ENCODE measurements at regions of chr4 and their contacts with region 1.

Region 1: DNA sequence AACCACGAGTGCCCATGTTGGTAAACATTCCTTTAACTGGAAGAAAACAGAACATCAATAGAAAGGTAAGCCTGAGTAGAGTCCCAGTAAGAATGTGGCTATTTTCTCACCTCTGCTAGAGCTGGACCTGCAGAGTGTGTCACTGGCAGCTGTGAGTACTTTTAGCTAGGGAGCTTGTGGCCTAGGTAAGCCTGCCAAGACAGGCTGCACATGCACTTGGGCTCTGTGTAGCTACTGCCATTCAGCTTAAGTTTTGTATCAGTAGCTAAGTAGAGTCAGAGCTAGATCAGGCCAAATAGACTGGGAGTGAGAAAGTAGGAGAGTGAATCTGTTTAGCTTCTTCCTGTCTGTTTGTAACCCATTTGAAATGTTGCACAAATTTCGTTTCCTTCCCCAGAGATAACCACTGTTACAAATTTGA is 35.3 kb downstream of the RBPJ start:
- DNase-seq: no peak
- H3K4me3 ChIP-seq: no peak overlapping the region
- H3K27ac ChIP-seq: no peak overlapping the region
- H3K4me1 ChIP-seq: peaks cover 0 to 12% (median 7%) of the 10 kb centered on the region in 4 experiments; a peak in 4 of 7 replicates
- H3K27me3 ChIP-seq: no peaks in the 10 kb centered on the region
- CTCF ChIP-seq: no peak
- EP300 ChIP-seq: no peak
- POLR2A ChIP-seq: no peak
- RAD21 ChIP-seq: no peak

Region 2: DNA sequence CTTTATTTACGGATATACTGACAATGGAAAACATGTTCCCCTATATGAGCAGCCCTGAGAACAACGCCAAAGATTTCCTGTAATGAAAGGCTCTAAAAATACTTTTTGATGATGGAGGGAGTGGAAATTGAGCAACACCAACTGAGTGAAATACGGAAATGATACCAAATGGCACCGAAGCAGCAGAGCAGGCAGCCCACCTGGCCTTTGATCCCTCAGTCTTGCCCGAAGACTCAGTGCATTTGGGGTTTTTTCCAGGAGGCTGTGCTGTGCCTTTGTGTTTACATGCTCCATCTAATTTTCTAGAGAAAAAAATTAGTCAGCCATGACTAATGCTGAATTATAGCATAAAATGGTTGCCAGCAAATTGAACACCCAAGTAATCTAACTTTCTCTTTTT is 205.1 kb before region 1 on chr4:
- CTCF ChIA-PET with region 1: no interaction called
- POLR2A ChIA-PET with region 1: no interaction called
- DNase-seq: no peak
- H3K4me3 ChIP-seq: no peak overlapping the region
- H3K27ac ChIP-seq: no peak overlapping the region
- H3K4me1 ChIP-seq: no peaks in the 10 kb centered on the region
- H3K27me3 ChIP-seq: no peaks in the 10 kb centered on the region
- CTCF ChIP-seq: no peak
- EP300 ChIP-seq: no peak
- POLR2A ChIP-seq: no peak
- RAD21 ChIP-seq: no peak

Region 3: DNA sequence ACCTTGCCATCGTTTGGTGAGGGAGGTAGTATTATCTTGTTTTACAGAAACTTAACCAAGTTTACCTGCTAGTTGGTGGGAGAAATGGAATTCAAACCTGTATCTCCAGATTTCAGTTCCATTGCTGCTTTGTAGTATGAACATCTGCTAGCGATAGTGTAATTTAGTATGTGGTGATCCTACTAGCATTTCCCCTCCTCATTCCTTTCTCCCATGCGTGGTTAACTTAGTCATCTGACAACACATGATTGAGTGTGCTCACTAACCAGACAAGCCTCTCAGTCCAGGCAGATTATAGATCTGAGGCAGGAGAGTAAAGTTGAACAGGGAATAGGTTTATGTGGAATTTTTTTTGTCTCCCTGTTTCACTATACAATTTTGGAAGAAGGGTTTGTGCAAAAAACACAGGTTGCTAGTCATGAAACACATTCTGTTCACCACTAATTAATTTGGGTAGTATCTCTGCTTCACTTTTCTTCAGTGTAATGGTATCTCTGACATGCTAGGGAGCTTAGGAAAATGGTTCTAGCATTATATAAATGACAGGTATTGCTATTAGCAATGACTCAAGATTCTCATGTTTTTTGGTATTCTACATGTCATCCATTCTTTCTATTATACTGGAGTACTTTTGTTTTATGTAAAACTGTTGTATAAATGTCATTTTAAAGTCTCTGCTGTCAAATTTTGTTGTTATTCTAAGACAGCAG is 13.6 kb before region 1 on chr4:
- CTCF ChIA-PET with region 1: interaction called, 20 read pairs
- POLR2A ChIA-PET with region 1: interaction called, 9 read pairs
- DNase-seq: no peak
- H3K4me3 ChIP-seq: no peak overlapping the region
- H3K27ac ChIP-seq: no peak overlapping the region
- H3K4me1 ChIP-seq: peaks cover 0 to 13% (median 5%) of the 10 kb centered on the region in 4 experiments; a peak in 5 of 7 replicates
- H3K27me3 ChIP-seq: no peaks in the 10 kb centered on the region
- CTCF ChIP-seq: no peak
- EP300 ChIP-seq: no peak
- POLR2A ChIP-seq: no peak
- RAD21 ChIP-seq: no peak

Region 4: DNA sequence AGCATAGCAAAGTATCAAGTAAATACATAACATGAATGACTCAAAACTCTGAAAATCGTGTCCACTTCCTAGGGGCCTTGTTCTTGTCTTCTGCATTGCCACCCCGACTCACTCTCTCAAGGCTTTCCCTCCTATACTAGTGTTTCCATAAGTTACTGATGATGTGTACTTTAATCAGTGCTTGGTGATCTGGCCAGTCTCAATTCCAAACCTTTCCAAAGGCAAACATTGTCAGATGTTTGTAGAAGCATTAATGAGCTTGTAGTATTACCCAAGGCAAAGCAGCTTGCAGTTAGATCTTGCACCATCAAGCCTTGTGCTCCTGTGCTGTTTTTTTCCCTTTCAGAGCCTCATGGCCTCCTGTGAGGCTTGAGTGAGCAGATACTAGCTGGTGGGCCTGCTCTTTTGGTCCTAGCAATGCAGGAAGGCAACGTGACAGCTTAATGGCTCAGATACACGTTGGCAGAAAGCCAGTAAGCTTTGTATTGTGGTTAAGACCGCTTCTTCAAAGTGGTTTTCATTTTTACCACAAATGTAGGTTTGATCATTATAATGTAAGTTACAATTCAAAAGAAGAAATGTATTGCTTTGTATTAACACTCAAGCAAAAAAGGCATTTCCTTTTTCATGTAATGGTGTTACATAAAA is 16.6 kb after region 1 on chr4:
- CTCF ChIA-PET with region 1: interaction called, 15 read pairs
- POLR2A ChIA-PET with region 1: interaction called, 3 read pairs
- DNase-seq: no peak
- H3K4me3 ChIP-seq: no peak overlapping the region
- H3K27ac ChIP-seq: no peak overlapping the region
- H3K4me1 ChIP-seq: peaks cover 0 to 16% (median 10%) of the 10 kb centered on the region in 4 experiments; a peak in 4 of 7 replicates
- H3K27me3 ChIP-seq: no peaks in the 10 kb centered on the region
- CTCF ChIP-seq: no peak
- EP300 ChIP-seq: no peak
- POLR2A ChIP-seq: no peak
- RAD21 ChIP-seq: no peak